BJ (cell line): ENCODE measurements at regions of chr7 and their contacts with region 1.

Region 1: GRCh38 chr7:124836173-124836572 is 70.6 kb upstream of the GPR37 start:
- DNase-seq: no peak
- H3K4me3 ChIP-seq: no peak overlapping the region
- H3K27me3 ChIP-seq: no peaks in the 10 kb centered on the region
- CTCF ChIP-seq: no peak

Region 2: DNA sequence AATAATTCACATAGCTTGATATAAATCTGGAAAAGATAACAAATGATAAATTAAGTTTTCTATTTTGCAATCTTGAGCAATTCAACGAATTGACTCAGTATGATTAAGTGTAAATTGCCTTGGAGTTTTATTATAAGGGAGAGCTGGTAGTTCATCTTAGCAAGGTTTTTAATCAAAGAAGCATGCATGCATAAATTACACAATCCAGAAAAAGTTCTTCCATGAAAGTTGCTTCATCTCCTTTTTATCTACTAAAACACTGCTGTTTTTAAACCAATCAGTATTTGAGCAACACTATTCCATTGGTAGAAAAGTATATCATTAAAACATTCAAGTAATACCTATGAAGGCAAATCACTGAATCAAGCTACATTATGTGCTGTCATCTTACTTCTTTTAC is 45.8 kb after region 1 on chr7:
- CTCF ChIA-PET with region 1: no interaction called
- POLR2A ChIA-PET with region 1: interaction called, 10 read pairs
- DNase-seq: no peak
- H3K4me3 ChIP-seq: no peak overlapping the region
- H3K27me3 ChIP-seq: no peaks in the 10 kb centered on the region
- CTCF ChIP-seq: no peak